Activated CD8-positive, alpha-beta T cell treated with anti-CD3 and anti-CD28 coated beads for 36 hours (primary cell): ENCODE measurements at regions of chr11 and their contacts with region 1.

Region 1: DNA sequence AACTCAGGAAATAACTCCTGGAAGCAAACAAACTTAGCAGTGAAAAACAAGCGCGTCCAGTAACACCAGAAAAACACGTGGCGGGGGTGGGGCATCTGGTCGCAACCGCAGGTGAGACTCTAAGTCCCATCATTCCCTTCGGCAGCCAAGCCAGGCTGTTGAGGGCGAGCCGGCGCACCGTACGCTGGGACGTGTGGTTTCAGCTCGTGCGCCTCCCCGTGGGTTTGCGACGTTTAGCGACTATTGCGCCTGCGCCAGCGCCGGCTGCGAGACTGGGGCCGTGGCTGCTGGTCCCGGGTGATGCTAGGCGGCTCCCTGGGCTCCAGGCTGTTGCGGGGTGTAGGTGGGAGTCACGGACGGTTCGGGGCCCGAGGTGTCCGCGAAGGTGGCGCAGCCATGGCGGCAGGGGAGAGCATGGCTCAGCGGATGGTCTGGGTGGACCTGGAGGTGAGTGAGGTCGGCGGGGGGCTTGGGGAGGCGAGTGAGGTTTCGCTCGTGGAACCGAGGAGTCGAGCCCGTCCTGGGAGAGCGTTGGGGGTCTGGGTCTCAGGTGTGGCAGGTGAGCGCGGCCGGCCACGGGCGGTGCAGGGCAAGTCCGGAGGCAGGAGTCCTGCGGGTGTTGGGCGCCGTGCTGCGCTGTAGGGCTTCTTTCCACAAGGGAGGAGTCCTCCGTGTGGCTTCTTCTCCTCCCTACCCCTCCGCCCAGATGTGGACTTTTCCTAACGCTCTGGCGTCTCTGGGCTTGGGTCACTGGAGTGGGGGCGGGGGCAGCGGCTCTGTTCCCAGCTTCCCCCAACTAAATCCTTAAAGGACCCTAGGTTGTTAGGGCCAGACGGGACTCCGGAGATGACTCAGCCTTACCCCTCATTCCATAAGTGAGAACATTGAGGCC is at the start of gene REXO2:
- DNase-seq: peak; percentile 96
- ATAC-seq: peak; percentile 97
- H3K4me3 Mint-ChIP-seq: peak within 1 kb of the TSS; percentile 96
- H3K27ac Mint-ChIP-seq: peak within 1 kb of the TSS; percentile 93
- H3K4me1 Mint-ChIP-seq: peaks cover 23% of the 10 kb centered on the region
- H3K27me3 Mint-ChIP-seq: no peaks in the 10 kb centered on the region
- CTCF ChIP-seq: no peak
- total RNA-seq, gene REXO2: 61.7 to 64.8 TPM

Region 2: GRCh38 chr11:114400217-114400914 is 39.1 kb before region 1 on chr11 and contains the starts of genes C11orf71 and RBM7:
- CTCF ChIA-PET with region 1: no interaction called
- POLR2A ChIA-PET with region 1: no interaction called
- intact Hi-C with region 1: loop called (anchors 2 kb)
- DNase-seq: peak; percentile 98
- ATAC-seq: peak; percentile 96
- H3K4me3 Mint-ChIP-seq: peak within 1 kb of the TSS; percentile 97
- H3K27ac Mint-ChIP-seq: peak within 1 kb of the TSS; percentile 99
- H3K4me1 Mint-ChIP-seq: peaks cover 42% of the 10 kb centered on the region
- H3K27me3 Mint-ChIP-seq: no peaks in the 10 kb centered on the region
- CTCF ChIP-seq: no peak
- total RNA-seq, gene C11orf71: 6.4 to 6.6 TPM
- total RNA-seq, gene RBM7: 51.4 to 52.6 TPM